ENCODE measurements at regions of chr21 and their contacts with region 1.

Region 1: DNA sequence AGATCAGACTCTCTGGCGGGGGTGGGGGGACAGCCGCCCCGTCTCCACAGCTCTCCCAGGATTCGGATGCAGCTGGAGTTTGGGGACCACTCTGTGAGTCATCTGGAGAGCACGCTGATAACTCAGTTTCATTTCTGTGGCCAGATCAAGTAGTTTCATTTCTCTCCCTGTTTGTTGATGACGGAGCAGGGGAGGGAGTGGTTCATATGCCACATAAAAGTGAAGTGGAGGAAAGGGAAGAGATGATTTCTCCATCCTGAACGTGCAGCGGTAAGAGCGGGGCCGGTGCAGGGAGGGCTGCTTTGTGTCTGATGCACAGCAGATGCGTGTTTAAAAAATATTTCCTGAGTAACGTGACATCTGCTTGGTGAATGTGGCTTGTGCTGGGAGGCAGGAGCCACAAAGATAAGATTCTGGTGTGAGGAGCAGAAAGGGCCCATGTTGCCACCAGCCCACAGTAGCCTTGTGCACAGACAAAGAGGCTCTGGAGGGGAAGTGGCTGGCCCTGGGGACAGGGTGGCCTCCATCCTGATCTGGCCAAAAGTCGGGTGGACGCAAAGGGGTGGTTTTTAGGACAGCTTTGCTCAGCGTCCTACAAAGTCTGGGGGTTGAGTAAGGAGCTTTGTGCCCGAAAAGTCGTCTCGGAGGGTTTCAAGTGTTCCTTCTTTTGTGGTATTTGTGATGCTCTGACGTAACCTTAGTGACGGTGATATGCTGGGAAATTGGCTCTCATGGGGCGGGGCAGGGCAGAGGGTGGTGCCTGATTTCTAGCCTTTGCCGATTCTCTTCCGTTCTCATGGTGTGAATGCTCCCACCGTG is at the start of gene MX2:
- DNase-seq: peak; percentile 89
- H3K4me3 Mint-ChIP-seq: peak within 1 kb of the TSS; percentile 80
- H3K27ac Mint-ChIP-seq: peak within 1 kb of the TSS; percentile 97
- H3K4me1 Mint-ChIP-seq: peaks cover 57% of the 10 kb centered on the region
- H3K27me3 Mint-ChIP-seq: no peaks in the 10 kb centered on the region
- total RNA-seq, gene MX2: 32.5 to 33.4 TPM

Region 2: GRCh38 chr21:41425954-41426675 is 64.1 kb after region 1 on chr21 and contains the start of gene MX1:
- CTCF ChIA-PET with region 1: interaction called, 3 read pairs
- intact Hi-C with region 1: loop called (anchors 1 kb)
- DNase-seq: peak; percentile 92
- H3K4me3 Mint-ChIP-seq: peak within 1 kb of the TSS; percentile 93
- H3K27ac Mint-ChIP-seq: peak within 1 kb of the TSS; percentile 92
- H3K4me1 Mint-ChIP-seq: peaks cover 38% of the 10 kb centered on the region
- H3K27me3 Mint-ChIP-seq: no peaks in the 10 kb centered on the region
- total RNA-seq, gene MX1: 138 to 145 TPM